BJ (cell line): ENCODE measurements at regions of chr22 and their contacts with region 1.

Region 1: DNA sequence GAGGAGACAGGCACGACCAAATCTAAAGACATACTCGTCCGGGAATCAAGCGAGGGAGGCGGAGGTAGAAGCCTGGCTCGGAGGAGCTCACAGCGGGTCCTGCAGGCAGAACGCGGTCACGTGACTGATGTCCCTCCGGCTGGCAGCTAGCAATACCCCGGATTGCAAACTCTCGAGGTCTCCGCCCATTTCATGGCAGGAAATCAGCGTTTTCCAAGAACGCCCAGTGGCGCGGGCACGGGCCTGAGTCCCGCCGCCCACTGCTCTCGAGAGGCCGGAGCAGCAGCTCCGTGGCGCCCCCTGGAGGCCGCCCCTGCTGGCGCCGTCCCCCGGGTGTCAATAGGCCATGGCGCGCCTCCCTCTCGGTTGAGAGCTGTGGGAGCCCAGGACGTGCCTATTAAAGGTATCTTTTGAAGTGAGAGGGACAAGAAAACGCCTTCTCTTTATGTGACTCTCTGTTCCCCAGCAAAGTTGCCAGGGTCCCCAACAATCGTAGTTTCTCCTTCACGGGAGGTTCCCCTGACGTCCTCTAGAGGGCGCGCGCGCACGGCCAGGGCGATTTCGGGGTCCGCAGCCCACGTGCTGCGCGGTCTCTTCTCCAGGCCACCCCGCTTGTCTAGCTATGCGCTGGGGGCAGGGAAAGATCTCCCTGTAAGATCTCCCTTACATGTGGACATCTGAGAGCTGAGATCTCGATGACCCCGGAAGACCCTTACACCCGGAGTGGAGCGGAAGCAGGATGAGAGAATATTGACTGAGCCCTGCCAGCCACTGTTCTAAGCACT is 37.3 kb upstream of the RBFOX2 start:
- DNase-seq: peak; percentile 64
- H3K4me3 ChIP-seq: peak overlapping the region; percentile 51
- H3K27me3 ChIP-seq: no peaks in the 10 kb centered on the region
- CTCF ChIP-seq: peak; percentile 98

Region 2: DNA sequence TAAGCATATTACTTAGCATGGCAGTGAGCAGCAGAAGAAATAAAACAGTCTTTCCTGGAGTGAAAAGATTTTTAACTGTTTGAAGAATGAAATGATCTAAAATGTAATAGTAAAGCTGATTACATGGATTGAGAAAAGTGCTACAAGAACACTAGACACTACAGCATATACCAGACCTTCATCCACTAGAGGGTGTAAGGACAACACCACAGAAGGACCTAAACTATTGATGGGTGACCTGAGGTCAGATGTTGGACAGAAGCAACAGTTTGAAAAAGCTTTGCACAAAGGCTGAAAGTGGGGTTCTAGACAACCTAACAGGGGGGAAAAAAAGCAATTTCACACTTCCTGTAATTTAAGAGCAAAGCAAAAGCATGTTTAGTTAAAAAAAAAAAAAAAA is 135.0 kb before region 1 on chr22:
- CTCF ChIA-PET with region 1: interaction called, 138 read pairs
- POLR2A ChIA-PET with region 1: no interaction called
- DNase-seq: no peak
- H3K4me3 ChIP-seq: no peak overlapping the region
- H3K27me3 ChIP-seq: no peaks in the 10 kb centered on the region
- CTCF ChIP-seq: peak; percentile 74

Region 3: GRCh38 chr22:35971456-35972119 is 94.4 kb before region 1 on chr22:
- CTCF ChIA-PET with region 1: interaction called, 33 read pairs
- POLR2A ChIA-PET with region 1: no interaction called
- DNase-seq: peak; percentile 91
- H3K4me3 ChIP-seq: peak overlapping the region; percentile 13; the same call in 1 of the 2 replicates
- H3K27me3 ChIP-seq: no peaks in the 10 kb centered on the region
- CTCF ChIP-seq: no peak

Region 4: GRCh38 chr22:36010882-36011281 is 55.1 kb before region 1 on chr22:
- CTCF ChIA-PET with region 1: interaction called, 15 read pairs
- POLR2A ChIA-PET with region 1: no interaction called
- DNase-seq: peak; percentile 67
- H3K4me3 ChIP-seq: no peak overlapping the region
- H3K27me3 ChIP-seq: no peaks in the 10 kb centered on the region
- CTCF ChIP-seq: no peak

Region 5: GRCh38 chr22:36081023-36081431 is 15.1 kb after region 1 on chr22:
- CTCF ChIA-PET with region 1: interaction called, 86 read pairs
- POLR2A ChIA-PET with region 1: interaction called, 5 read pairs
- DNase-seq: peak; percentile 45
- H3K4me3 ChIP-seq: no peak overlapping the region
- H3K27me3 ChIP-seq: no peaks in the 10 kb centered on the region
- CTCF ChIP-seq: no peak

Region 6: GRCh38 chr22:36129486-36130388 is 63.8 kb after region 1 on chr22:
- CTCF ChIA-PET with region 1: interaction called, 29 read pairs
- POLR2A ChIA-PET with region 1: no interaction called
- DNase-seq: no peak
- H3K4me3 ChIP-seq: no peak overlapping the region
- H3K27me3 ChIP-seq: peaks cover 22% of the 10 kb centered on the region
- CTCF ChIP-seq: no peak